Left cardiac atrium (tissue), 4 donors: ENCODE measurements at regions of chr2 and their contacts with region 1.

Region 1: GRCh38 chr2:178112202-178113152 is at the start of gene RBM45:
- DNase-seq: peak; percentile 95
- ATAC-seq: peak; percentile 99
- total RNA-seq, gene RBM45: 5.6 to 6.4 TPM

Region 2: DNA sequence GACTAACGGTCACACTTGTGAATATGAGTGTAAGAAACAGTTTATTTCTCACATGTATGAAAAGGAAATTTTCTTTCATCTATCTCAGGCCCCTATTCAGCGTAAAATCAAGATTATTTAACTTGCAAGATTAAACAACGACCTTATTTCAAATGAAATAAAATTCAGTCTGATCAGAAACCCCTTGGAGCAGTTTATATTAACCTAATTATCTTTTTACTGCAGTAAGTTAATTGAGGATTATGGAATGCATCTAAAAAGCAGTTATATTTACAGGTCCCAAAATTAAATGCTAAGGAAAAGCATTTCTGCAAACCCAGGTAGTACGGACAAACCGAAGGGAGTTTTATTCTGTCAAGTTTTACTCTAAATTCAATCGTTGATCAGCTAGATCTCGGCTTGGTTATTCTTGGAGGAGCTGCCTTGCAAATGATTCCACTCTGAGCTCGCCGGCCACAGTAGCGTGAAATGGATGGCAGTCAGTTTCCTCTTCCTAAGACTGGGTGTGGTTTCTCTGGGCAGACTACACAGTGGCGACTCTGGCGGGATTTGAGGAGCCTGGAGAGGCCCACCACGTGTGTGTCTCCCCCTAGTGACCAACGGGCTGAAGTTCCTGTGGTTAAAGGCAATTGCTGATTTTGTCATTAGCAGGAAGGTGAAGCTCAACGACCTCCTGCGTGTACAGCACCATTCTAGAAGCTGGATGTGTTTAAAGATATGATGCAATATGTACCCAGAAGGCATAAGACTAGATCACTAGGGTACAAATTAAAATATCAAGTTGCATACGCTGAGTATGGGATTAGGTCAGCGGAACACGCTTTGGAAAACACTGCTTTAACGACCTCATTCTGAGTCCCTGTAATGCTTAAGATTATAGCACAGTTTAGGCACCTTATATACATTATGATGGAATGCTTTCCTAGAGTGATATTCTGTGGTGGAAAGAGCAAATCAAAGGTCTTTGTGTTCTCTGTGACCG is 302.1 kb after region 1 on chr2:
- intact Hi-C with region 1: loop called in 1 of 2 experiments (anchors 2 kb)
- DNase-seq: peak; percentile 92
- ATAC-seq: peak; percentile 97